Naive thymus-derived CD4-positive, alpha-beta T cell (primary cell): ENCODE measurements at regions of chr15 and their contacts with region 1.

Region 1: GRCh38 chr15:93087825-93088199 is 1.2 kb downstream of the RGMA start:
- DNase-seq: peak; percentile 15 to 68 (median 48)
- ATAC-seq: peak; percentile 84
- H3K4me3 ChIP-seq: peak overlapping the region; percentile 33
- H3K4me3 Mint-ChIP-seq: peak overlapping the region; percentile 75 to 94 (median 87)
- H3K27ac ChIP-seq: no peak overlapping the region
- H3K27ac Mint-ChIP-seq: peak overlapping the region in 1 of 9 donors; percentile 48
- H3K4me1 ChIP-seq: peaks cover 0 to 4% of the 10 kb centered on the region in 2 donors
- H3K4me1 Mint-ChIP-seq: peaks cover 10 to 26% (median 16%) of the 10 kb centered on the region in 7 donors
- H3K27me3 ChIP-seq: peaks cover 15 to 22% of the 10 kb centered on the region in 2 donors
- H3K27me3 Mint-ChIP-seq: peaks cover 64 to 72% (median 68%) of the 10 kb centered on the region in 5 donors

Region 2: GRCh38 chr15:93030430-93031105 is 57.2 kb before region 1 on chr15:
- CTCF ChIA-PET with region 1: interaction called, 3 read pairs
- POLR2A ChIA-PET with region 1: no interaction called
- intact Hi-C with region 1: loop called in 1 of 2 experiments (anchors 5 kb)
- DNase-seq: peak; percentile 38 to 69 (median 59)
- ATAC-seq: peak; percentile 85
- H3K4me3 ChIP-seq: no peak overlapping the region
- H3K4me3 Mint-ChIP-seq: peak overlapping the region in 1 of 10 donors; percentile 12
- H3K27ac ChIP-seq: no peak overlapping the region
- H3K27ac Mint-ChIP-seq: peak overlapping the region in 6 of 9 donors; percentile 69 to 82 (median 74)
- H3K4me1 ChIP-seq: peaks cover 0 to 11% of the 10 kb centered on the region in 2 donors
- H3K4me1 Mint-ChIP-seq: peaks cover 6 to 33% (median 20%) of the 10 kb centered on the region in 7 donors
- H3K27me3 ChIP-seq: no peaks in the 10 kb centered on the region
- H3K27me3 Mint-ChIP-seq: no peaks in the 10 kb centered on the region

Region 3: DNA sequence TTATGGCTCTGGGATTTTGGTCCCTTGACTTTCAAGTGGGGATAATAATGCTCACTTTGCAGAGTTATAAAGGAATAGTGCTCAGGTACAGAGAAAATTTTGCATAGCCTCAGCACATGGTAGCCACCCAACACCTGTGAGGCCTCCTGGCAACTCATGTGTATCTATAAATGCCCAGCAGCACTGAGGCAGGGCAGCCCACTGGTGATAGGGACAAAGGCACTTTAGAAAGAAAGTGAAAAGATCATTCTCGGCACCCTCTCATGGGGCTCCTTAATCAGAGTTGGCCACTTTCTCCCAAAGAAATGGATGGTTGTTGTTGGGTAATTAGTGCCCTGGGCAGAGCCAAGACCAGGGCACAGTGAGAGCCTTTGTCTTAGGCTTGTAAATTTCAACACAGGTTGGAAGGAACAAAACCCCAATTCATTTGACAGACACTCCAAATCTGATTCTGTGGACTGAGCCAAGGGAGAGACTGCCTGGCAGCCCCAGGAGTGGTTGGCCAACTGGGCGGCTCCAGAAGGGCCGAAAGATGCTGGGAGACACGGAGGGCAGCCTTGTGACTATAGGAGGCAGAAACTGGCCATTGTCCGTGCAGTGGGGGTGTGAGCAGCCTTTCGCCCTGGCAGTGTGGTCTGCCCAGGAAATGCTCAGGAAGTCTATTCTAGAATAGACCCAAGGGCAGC is 214.4 kb after region 1 on chr15:
- CTCF ChIA-PET with region 1: no interaction called
- POLR2A ChIA-PET with region 1: no interaction called
- intact Hi-C with region 1: loop called in 1 of 2 experiments (anchors 10 kb)
- DNase-seq: no peak
- ATAC-seq: no peak
- H3K4me3 ChIP-seq: no peak overlapping the region
- H3K4me3 Mint-ChIP-seq: no peak overlapping the region
- H3K27ac ChIP-seq: no peak overlapping the region
- H3K27ac Mint-ChIP-seq: no peak overlapping the region
- H3K4me1 ChIP-seq: no peaks in the 10 kb centered on the region
- H3K4me1 Mint-ChIP-seq: no peaks in the 10 kb centered on the region
- H3K27me3 ChIP-seq: no peaks in the 10 kb centered on the region
- H3K27me3 Mint-ChIP-seq: peaks cover 0 to 19% (median 0%) of the 10 kb centered on the region in 5 donors

Region 4: GRCh38 chr15:93610944-93611343 is 523.1 kb after region 1 on chr15:
- CTCF ChIA-PET with region 1: no interaction called
- POLR2A ChIA-PET with region 1: no interaction called
- intact Hi-C with region 1: loop called in 1 of 2 experiments (anchors 2 kb)
- DNase-seq: no peak
- ATAC-seq: no peak
- H3K4me3 ChIP-seq: no peak overlapping the region
- H3K4me3 Mint-ChIP-seq: no peak overlapping the region
- H3K27ac ChIP-seq: no peak overlapping the region
- H3K27ac Mint-ChIP-seq: no peak overlapping the region
- H3K4me1 ChIP-seq: no peaks in the 10 kb centered on the region
- H3K4me1 Mint-ChIP-seq: no peaks in the 10 kb centered on the region
- H3K27me3 ChIP-seq: no peaks in the 10 kb centered on the region
- H3K27me3 Mint-ChIP-seq: peaks cover 0 to 10% (median 7%) of the 10 kb centered on the region in 5 donors